Activated naive CD4-positive, alpha-beta T cell treated with anti-CD3 and anti-CD28 coated beads, Interleukin-2, amount 10 ng/mL, durations not matched to agents 7 days and 5 days (primary cell): ENCODE measurements at regions of chr7 and their contacts with region 1.

Region 1: GRCh38 chr7:92833024-92833765 is 3.2 kb downstream of the CDK6 start:
- DNase-seq: peak; percentile 93
- H3K4me3 Mint-ChIP-seq: peak overlapping the region; percentile 86
- H3K27ac Mint-ChIP-seq: peak overlapping the region; percentile 96
- H3K4me1 Mint-ChIP-seq: peaks cover 45% of the 10 kb centered on the region
- H3K27me3 Mint-ChIP-seq: peaks cover 29% of the 10 kb centered on the region

Region 2: DNA sequence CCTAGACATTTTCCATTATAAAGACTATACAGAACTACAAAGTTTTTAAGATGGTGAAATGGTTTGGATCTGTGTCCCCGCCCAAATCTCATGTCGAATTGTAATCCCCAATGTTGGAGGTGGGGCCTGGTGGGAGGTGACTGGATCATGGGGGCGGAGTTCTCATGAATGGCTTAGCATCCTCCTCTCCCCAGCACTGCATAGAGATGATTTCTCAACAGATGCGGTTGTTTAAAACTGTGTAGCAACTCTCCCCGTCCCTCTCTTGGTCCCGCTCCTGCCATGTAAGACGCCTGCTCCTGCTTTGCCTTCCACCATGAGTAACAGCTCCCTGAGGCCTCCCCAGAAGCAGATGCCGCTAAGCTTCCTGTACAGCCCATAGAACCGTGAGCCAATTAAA is 244.6 kb before region 1 on chr7:
- CTCF ChIA-PET with region 1: no interaction called
- DNase-seq: no peak
- H3K4me3 Mint-ChIP-seq: peak overlapping the region; percentile 78
- H3K27ac Mint-ChIP-seq: peak overlapping the region; percentile 57
- H3K4me1 Mint-ChIP-seq: peaks cover 50% of the 10 kb centered on the region
- H3K27me3 Mint-ChIP-seq: peaks cover 19% of the 10 kb centered on the region

Region 3: GRCh38 chr7:92621026-92621540 is 212.1 kb before region 1 on chr7:
- CTCF ChIA-PET with region 1: interaction called, 40 read pairs
- DNase-seq: peak; percentile 90
- H3K4me3 Mint-ChIP-seq: peak overlapping the region; percentile 52
- H3K27ac Mint-ChIP-seq: peak overlapping the region; percentile 88
- H3K4me1 Mint-ChIP-seq: peaks cover 53% of the 10 kb centered on the region
- H3K27me3 Mint-ChIP-seq: no peaks in the 10 kb centered on the region

Region 4: GRCh38 chr7:92691578-92691977 is 141.6 kb before region 1 on chr7:
- CTCF ChIA-PET with region 1: interaction called, 15 read pairs
- DNase-seq: no peak
- H3K4me3 Mint-ChIP-seq: no peak overlapping the region
- H3K27ac Mint-ChIP-seq: peak overlapping the region; percentile 81
- H3K4me1 Mint-ChIP-seq: peaks cover 76% of the 10 kb centered on the region
- H3K27me3 Mint-ChIP-seq: no peaks in the 10 kb centered on the region

Region 5: DNA sequence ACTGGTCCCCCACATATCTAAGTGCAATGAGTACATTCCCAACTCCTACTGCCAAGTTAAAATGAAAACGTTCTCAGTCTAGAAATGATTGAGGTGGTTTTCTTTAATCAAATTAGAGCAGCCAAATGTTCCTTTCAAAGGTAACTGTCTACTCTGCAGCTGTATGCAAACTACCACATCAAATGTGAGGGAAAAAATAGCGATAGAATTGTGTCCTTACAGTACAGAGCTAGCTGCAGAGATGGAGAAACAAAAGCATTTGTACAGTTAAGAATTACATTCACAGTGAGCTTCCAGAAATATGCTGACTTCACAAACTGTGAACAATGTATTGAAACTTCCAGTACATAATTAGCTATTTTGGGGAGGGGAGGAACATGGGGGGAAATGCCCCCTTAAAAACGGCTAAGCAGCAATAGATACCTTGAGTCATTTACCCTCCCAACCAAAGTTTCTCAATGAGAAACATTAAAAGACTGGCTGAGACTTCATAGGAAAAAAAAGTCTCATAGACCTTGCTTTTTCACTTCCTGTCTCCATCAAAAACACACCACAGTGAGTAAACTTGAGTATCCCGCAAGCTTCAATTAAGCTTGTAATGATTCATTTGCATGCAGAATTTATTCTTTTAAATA is 19.7 kb before region 1 on chr7:
- CTCF ChIA-PET with region 1: interaction called, 19 read pairs
- DNase-seq: peak; percentile 25
- H3K4me3 Mint-ChIP-seq: peak overlapping the region; percentile 57
- H3K27ac Mint-ChIP-seq: peak overlapping the region; percentile 93
- H3K4me1 Mint-ChIP-seq: peaks cover 83% of the 10 kb centered on the region
- H3K27me3 Mint-ChIP-seq: no peaks in the 10 kb centered on the region

Region 6: GRCh38 chr7:92820191-92820590 is 13.0 kb before region 1 on chr7:
- CTCF ChIA-PET with region 1: interaction called, 13 read pairs
- DNase-seq: no peak
- H3K4me3 Mint-ChIP-seq: no peak overlapping the region
- H3K27ac Mint-ChIP-seq: no peak overlapping the region
- H3K4me1 Mint-ChIP-seq: peaks cover 64% of the 10 kb centered on the region
- H3K27me3 Mint-ChIP-seq: no peaks in the 10 kb centered on the region

Region 7: GRCh38 chr7:92843034-92843760 is 10.0 kb after region 1 on chr7:
- CTCF ChIA-PET with region 1: no interaction called
- DNase-seq: no peak
- H3K4me3 Mint-ChIP-seq: no peak overlapping the region
- H3K27ac Mint-ChIP-seq: no peak overlapping the region
- H3K4me1 Mint-ChIP-seq: no peaks in the 10 kb centered on the region
- H3K27me3 Mint-ChIP-seq: peaks cover 28% of the 10 kb centered on the region